ENCODE measurements at regions of chr11 and their contacts with region 1.

Region 1: GRCh38 chr11:16049611-16050010 is 306.7 kb downstream of the SOX6 start:
- DNase-seq: no peak
- ATAC-seq: no peak
- H3K4me3 ChIP-seq: no peak overlapping the region
- H3K27ac ChIP-seq: no peak overlapping the region
- H3K4me1 ChIP-seq: no peaks in the 10 kb centered on the region
- H3K27me3 ChIP-seq: no peaks in the 10 kb centered on the region
- CTCF ChIP-seq: no peak
- POLR2A ChIP-seq: no peak
- RAD21 ChIP-seq: no peak

Region 2: GRCh38 chr11:16097543-16097942 is 47.9 kb after region 1 on chr11:
- CTCF ChIA-PET with region 1: no interaction called
- POLR2A ChIA-PET with region 1: no interaction called
- dilution Hi-C with region 1: no loop called
- in situ Hi-C with region 1: no loop called
- intact Hi-C with region 1: loop called (anchors 5 kb)
- DNase-seq: no peak
- ATAC-seq: no peak
- H3K4me3 ChIP-seq: no peak overlapping the region
- H3K27ac ChIP-seq: no peak overlapping the region
- H3K4me1 ChIP-seq: peaks cover 7% of the 10 kb centered on the region
- H3K27me3 ChIP-seq: no peaks in the 10 kb centered on the region
- CTCF ChIP-seq: no peak
- POLR2A ChIP-seq: no peak
- RAD21 ChIP-seq: no peak

Measured in IMR-90 (cell line).